Activated B cell treated with CpG ODN at 0.5 μM for 24 hours (primary cell): ENCODE measurements at regions of chr2 and their contacts with region 1.

Region 1: GRCh38 chr2:64330281-64331113 is 123.5 kb upstream of the LGALSL start:
- DNase-seq: peak; percentile 41
- ATAC-seq: no peak
- H3K4me3 Mint-ChIP-seq: peak overlapping the region; percentile 55
- H3K27ac Mint-ChIP-seq: peak overlapping the region; percentile 10
- H3K4me1 Mint-ChIP-seq: peaks cover 47% of the 10 kb centered on the region
- H3K27me3 Mint-ChIP-seq: no peaks in the 10 kb centered on the region
- CTCF ChIP-seq: peak; percentile 45

Region 2: GRCh38 chr2:63841254-63842022 is 489.1 kb before region 1 on chr2 and contains the start of gene UGP2:
- CTCF ChIA-PET with region 1: no interaction called
- POLR2A ChIA-PET with region 1: no interaction called
- intact Hi-C with region 1: loop called (anchors 2 kb)
- DNase-seq: peak; percentile 75
- ATAC-seq: peak; percentile 68
- H3K4me3 Mint-ChIP-seq: peak within 1 kb of the TSS; percentile 97
- H3K27ac Mint-ChIP-seq: peak within 1 kb of the TSS; percentile 97
- H3K4me1 Mint-ChIP-seq: peaks cover 53% of the 10 kb centered on the region
- H3K27me3 Mint-ChIP-seq: peaks cover 1% of the 10 kb centered on the region
- CTCF ChIP-seq: no peak
- total RNA-seq, gene UGP2: 69.8 and 73.5 TPM in 2 replicates

Region 3: DNA sequence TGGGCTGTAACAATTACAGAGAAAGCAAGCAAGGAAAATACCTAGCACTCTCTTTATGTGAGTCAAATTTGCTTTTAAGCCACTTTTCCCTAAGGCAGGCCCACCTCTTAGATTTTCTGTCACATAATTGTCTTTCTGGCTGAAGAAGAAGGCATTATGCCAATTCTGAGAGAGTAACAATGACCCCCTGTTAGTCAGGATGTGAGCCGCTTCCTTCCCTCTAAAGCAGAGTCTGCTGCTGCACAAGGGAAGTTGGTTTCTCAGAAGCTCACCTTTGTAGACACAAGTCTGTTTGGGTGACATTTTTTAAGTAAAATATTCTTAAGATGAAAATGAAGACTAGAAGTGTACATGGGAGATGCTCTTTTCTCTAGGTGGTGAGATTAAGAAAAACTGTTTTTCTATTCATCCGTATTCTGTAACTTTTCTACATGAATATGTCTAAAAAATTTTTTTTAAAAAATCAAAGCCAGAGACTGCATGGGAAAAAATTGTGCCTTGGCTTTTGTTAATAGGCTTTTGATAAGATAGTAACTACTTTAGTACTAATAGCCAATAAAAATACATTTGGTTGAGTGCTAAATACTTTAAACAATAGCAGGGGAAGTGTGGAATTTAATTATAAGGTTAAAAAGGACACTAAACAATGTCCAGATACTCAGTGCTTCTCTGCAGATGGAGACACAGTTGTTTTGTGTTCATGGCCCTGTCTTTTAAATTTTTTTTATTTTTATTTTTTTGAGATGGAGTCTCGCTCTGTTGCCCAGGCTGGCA is 277.8 kb before region 1 on chr2:
- CTCF ChIA-PET with region 1: interaction called, 321 read pairs
- POLR2A ChIA-PET with region 1: interaction called, 115 read pairs
- intact Hi-C with region 1: loop called (anchors 1 kb)
- DNase-seq: no peak
- ATAC-seq: no peak
- H3K4me3 Mint-ChIP-seq: no peak overlapping the region
- H3K27ac Mint-ChIP-seq: no peak overlapping the region
- H3K4me1 Mint-ChIP-seq: peaks cover 24% of the 10 kb centered on the region
- H3K27me3 Mint-ChIP-seq: no peaks in the 10 kb centered on the region
- CTCF ChIP-seq: no peak

Region 4: GRCh38 chr2:64203858-64204632 is 126.5 kb before region 1 on chr2:
- CTCF ChIA-PET with region 1: interaction called, 3 read pairs
- POLR2A ChIA-PET with region 1: interaction called, 17 read pairs
- intact Hi-C with region 1: loop called (anchors 2 kb)
- DNase-seq: peak; percentile 42
- ATAC-seq: peak; percentile 79
- H3K4me3 Mint-ChIP-seq: peak overlapping the region; percentile 83
- H3K27ac Mint-ChIP-seq: peak overlapping the region; percentile 93
- H3K4me1 Mint-ChIP-seq: peaks cover 72% of the 10 kb centered on the region
- H3K27me3 Mint-ChIP-seq: no peaks in the 10 kb centered on the region
- CTCF ChIP-seq: no peak

Region 5: DNA sequence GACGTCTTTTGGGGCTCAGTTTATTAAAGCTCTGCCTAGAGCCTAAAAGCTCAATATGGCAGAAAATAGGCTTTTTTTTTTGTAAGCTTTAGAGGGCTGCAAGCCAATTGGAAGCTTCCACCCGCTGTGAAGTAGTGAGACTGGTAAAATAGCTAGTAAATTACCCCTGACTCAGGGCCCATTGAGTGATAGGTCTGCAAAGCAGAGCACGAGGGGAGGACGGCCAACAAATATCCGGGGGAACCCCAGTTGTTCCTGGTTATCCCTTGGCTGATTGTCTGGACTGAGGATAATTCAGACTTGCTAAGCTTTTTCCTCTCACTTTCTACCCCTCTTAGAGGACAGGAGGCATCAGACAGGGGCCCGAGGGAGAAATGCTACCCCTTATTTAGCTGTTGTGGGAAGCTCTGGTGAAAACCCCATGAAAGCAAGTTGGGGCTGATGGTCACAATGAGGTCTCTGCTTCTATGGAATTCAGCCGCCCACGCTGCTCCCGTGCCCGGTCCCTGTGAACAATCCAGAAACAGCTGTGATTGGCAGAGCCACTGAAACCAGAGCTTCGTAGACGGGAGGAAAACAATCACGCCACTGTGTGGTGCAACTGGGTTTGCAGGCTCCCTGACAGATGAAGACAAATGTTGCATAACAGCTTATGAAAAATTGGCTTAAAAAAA is 18.4 kb before region 1 on chr2:
- CTCF ChIA-PET with region 1: interaction called, 27 read pairs
- POLR2A ChIA-PET with region 1: interaction called, 5 read pairs
- intact Hi-C with region 1: no loop called
- DNase-seq: no peak
- ATAC-seq: no peak
- H3K4me3 Mint-ChIP-seq: no peak overlapping the region
- H3K27ac Mint-ChIP-seq: no peak overlapping the region
- H3K4me1 Mint-ChIP-seq: no peaks in the 10 kb centered on the region
- H3K27me3 Mint-ChIP-seq: no peaks in the 10 kb centered on the region
- CTCF ChIP-seq: no peak

Region 6: DNA sequence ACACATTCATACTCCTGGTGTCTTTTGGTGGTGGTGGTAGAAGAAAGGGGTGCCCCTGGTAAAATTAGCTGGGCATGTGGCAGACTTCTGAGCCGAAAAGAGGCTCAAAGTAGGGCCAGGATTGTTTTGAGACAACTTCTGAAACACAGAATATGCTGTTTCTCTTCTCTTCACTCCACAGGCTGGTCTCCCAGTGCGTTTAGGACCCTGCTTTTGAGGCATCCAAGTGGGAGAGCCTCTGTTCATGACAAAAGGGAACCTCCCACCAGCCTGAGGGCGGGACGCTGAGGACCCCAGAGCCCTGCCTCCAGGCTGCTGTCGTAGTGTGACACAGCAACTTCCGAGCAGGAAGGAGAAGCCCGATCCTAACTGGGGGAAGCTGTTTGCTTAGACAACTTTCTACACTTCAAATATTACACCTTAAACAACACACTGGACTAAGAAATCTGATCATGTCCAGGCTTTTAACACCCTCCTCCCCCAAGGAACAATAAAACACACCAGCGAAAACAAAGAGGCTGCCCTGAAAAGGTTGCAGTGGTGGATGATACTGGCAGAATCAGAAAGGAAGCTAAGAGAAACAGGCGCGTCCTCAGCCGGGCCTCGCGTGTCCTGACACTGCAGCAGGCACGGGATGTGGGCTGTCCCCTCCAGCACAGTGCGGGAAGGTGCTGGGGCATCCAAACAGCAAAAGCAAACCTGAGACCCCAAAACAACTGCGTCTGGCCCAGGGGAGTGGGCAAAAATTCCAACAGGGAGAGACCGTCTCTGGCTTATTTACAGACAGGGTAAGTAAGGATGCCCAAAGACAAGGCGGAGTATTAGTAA is 313.9 kb after region 1 on chr2:
- CTCF ChIA-PET with region 1: interaction called, 3 read pairs
- POLR2A ChIA-PET with region 1: no interaction called
- intact Hi-C with region 1: loop called (anchors 5 kb)
- DNase-seq: peak; percentile 48
- ATAC-seq: peak; percentile 45
- H3K4me3 Mint-ChIP-seq: peak overlapping the region; percentile 86
- H3K27ac Mint-ChIP-seq: peak overlapping the region; percentile 93
- H3K4me1 Mint-ChIP-seq: peaks cover 96% of the 10 kb centered on the region
- H3K27me3 Mint-ChIP-seq: no peaks in the 10 kb centered on the region
- CTCF ChIP-seq: no peak

Region 7: DNA sequence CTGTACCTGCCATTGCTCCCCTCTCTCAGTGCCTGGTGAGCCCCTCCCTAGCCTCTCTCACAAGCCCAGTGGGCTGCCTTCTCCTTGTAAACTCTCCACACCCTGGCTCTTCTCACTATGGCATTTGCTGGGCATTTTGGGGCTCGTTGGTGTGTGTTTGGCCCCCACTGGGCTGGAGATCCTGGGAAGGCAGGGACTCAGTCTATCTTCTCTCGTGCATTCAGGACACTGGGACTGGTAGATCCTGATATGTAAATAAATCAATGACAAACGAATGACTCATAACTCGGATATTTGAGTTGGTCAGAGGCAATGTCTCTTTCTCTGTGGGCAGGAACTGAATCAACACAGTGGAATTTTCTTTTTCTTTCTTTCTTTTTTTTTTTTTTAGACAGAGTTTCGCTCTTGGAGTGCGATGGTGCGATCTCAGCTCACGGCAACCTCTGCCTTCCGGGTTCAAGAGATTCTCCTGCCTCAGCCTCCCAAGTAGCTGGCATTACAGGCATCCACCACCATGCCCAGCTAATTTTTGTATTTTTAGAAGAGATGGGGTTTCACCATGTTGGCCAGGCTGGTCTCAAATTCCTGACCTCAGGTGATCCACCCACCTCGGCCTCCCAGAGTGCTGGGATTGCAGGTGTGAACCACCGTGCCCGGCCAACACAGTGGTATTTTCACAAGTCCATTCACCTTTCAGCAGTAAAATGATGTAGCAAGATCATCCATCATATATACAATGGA is 1246.5 kb after region 1 on chr2:
- CTCF ChIA-PET with region 1: no interaction called
- POLR2A ChIA-PET with region 1: no interaction called
- intact Hi-C with region 1: loop called (anchors 2 kb)
- DNase-seq: no peak
- ATAC-seq: no peak
- H3K4me3 Mint-ChIP-seq: no peak overlapping the region
- H3K27ac Mint-ChIP-seq: no peak overlapping the region
- H3K4me1 Mint-ChIP-seq: peaks cover 6% of the 10 kb centered on the region
- H3K27me3 Mint-ChIP-seq: peaks cover 2% of the 10 kb centered on the region
- CTCF ChIP-seq: no peak